Mammary epithelial cell (primary cell): ENCODE measurements at regions of chr15 and their contacts with region 1.

Region 1: GRCh38 chr15:36415643-36416042 is 163.8 kb upstream of the CDIN1 start:
- DNase-seq: peak; percentile 53
- H3K4me3 ChIP-seq: no peak overlapping the region
- H3K27ac ChIP-seq: no peak overlapping the region
- H3K4me1 ChIP-seq: no peaks in the 10 kb centered on the region
- H3K27me3 ChIP-seq: no peaks in the 10 kb centered on the region
- CTCF ChIP-seq: no peak

Region 2: DNA sequence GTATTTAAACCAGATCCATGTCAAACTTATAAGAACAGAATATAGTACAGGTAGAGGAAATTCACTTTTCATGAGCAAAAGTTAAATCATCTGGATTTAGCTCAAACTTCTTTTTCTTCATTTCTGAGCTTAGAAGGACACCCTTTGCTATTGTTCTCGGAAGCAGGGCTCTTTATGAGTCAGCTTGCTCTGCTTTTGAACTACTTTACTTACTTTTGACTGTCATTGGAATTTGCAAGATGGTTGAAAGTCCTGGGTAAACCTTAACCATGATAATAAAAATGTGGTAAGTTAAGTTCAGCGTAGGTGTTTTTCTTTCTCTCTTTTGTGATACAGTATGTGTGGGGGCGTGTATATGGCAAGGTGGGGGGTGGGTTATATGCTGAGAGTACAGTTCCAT is 556.9 kb before region 1 on chr15:
- CTCF ChIA-PET with region 1: no interaction called
- dilution Hi-C with region 1: no loop called
- in situ Hi-C with region 1: no loop called
- intact Hi-C with region 1: no loop called
- DNase-seq: no peak
- H3K4me3 ChIP-seq: no peak overlapping the region
- H3K27ac ChIP-seq: no peak overlapping the region
- H3K4me1 ChIP-seq: no peaks in the 10 kb centered on the region
- H3K27me3 ChIP-seq: no peaks in the 10 kb centered on the region
- CTCF ChIP-seq: no peak

Region 3: DNA sequence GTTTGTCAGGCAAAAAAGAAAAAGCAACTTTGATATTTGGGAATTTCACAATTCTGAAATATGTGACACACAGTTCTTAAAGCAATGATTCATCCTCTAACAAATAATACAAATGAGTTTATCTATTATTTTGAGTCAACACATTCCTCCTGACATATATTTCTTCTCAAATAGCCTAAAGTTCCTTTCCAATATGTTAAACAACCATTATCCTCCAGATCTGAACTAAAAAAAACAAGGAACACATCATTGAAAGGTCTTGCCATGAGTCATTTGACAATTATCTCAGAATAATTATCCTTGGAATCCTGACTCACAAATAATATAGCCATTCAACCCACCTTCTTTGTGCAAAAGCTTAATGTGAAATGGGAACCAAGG is 44.9 kb before region 1 on chr15:
- CTCF ChIA-PET with region 1: no interaction called
- dilution Hi-C with region 1: loop called (anchors 5 kb)
- in situ Hi-C with region 1: no loop called
- intact Hi-C with region 1: no loop called
- DNase-seq: peak; percentile 87
- H3K4me3 ChIP-seq: no peak overlapping the region
- H3K27ac ChIP-seq: peak overlapping the region; percentile 49
- H3K4me1 ChIP-seq: peaks cover 24% of the 10 kb centered on the region
- H3K27me3 ChIP-seq: no peaks in the 10 kb centered on the region
- CTCF ChIP-seq: no peak

Region 4: GRCh38 chr15:36468746-36469145 is 53.1 kb after region 1 on chr15:
- CTCF ChIA-PET with region 1: no interaction called
- dilution Hi-C with region 1: no loop called
- in situ Hi-C with region 1: no loop called
- intact Hi-C with region 1: no loop called
- DNase-seq: peak; percentile 96
- H3K4me3 ChIP-seq: no peak overlapping the region
- H3K27ac ChIP-seq: peak overlapping the region; percentile 59
- H3K4me1 ChIP-seq: peaks cover 19% of the 10 kb centered on the region
- H3K27me3 ChIP-seq: no peaks in the 10 kb centered on the region
- CTCF ChIP-seq: no peak